Activated T-helper 1 cell treated with anti-CD3 and anti-CD28 coated beads, Interleukin-12 subunit alpha, Interleukin-12 subunit beta, Interleukin-2, Interleukin-4 antibody, amounts not matched to agents 30 ng/mL and 10 ng/mL and 1 ng/mL, durations not matched to agents 14 hours and 24 hours and 36 hours (primary cell): ENCODE measurements at regions of chr2 and their contacts with region 1.

Region 1: GRCh38 chr2:110847651-110848050 is 115.3 kb downstream of the ACOXL start:
- DNase-seq: no peak
- H3K4me3 Mint-ChIP-seq: no peak overlapping the region
- H3K27ac Mint-ChIP-seq: peak overlapping the region; percentile 96
- H3K4me1 Mint-ChIP-seq: peaks cover 88% of the 10 kb centered on the region
- H3K27me3 Mint-ChIP-seq: peaks cover 6% of the 10 kb centered on the region

Region 2: DNA sequence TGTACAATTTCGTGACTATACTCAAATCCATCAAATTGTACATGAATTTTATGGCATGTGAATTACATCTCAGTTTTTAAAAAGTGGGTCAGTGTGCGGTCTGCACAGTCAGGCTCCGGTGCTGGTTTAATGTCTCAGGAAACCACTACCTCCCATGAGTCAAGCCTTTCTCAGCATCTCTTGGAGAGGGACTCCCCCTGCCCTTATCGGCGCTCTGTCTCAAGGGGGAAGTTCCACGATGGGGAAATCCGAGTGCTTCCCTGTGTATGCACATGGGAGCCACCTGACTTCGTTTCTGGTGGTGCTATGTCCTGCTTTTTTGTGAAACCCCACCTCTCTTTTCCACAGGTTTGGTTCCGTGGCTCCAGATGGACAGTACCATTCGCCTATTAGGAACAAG is 42.7 kb before region 1 on chr2:
- intact Hi-C with region 1: loop called (anchors 1 kb)
- DNase-seq: peak; percentile 66
- H3K4me3 Mint-ChIP-seq: peak overlapping the region; percentile 45
- H3K27ac Mint-ChIP-seq: peak overlapping the region; percentile 46
- H3K4me1 Mint-ChIP-seq: peaks cover 25% of the 10 kb centered on the region
- H3K27me3 Mint-ChIP-seq: peaks cover 42% of the 10 kb centered on the region

Region 3: GRCh38 chr2:110871637-110872036 is 24.0 kb after region 1 on chr2:
- intact Hi-C with region 1: loop called (anchors 1 kb)
- DNase-seq: peak; percentile 34
- H3K4me3 Mint-ChIP-seq: no peak overlapping the region
- H3K27ac Mint-ChIP-seq: no peak overlapping the region
- H3K4me1 Mint-ChIP-seq: peaks cover 69% of the 10 kb centered on the region
- H3K27me3 Mint-ChIP-seq: peaks cover 14% of the 10 kb centered on the region

Region 4: DNA sequence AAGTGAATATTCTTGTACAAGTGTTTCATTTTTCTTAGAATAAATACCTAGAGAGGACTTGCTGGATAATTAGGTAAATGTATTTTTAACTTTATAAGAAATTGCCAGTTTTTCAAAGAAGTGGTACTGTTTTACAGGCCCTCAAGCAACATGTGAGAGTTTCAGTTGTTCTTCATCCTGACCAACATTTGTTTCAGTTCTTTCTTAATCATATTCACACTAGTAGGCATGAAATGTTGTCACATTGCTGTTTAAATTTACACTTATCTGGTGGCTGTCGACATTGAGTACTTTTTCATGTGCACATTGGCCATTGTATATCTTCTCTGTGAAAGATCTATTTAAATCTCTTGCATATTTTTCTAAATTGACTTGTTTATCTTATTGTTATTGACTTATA is 62.8 kb after region 1 on chr2:
- intact Hi-C with region 1: loop called (anchors 2 kb)
- DNase-seq: no peak
- H3K4me3 Mint-ChIP-seq: no peak overlapping the region
- H3K27ac Mint-ChIP-seq: no peak overlapping the region
- H3K4me1 Mint-ChIP-seq: no peaks in the 10 kb centered on the region
- H3K27me3 Mint-ChIP-seq: peaks cover 38% of the 10 kb centered on the region

Region 5: DNA sequence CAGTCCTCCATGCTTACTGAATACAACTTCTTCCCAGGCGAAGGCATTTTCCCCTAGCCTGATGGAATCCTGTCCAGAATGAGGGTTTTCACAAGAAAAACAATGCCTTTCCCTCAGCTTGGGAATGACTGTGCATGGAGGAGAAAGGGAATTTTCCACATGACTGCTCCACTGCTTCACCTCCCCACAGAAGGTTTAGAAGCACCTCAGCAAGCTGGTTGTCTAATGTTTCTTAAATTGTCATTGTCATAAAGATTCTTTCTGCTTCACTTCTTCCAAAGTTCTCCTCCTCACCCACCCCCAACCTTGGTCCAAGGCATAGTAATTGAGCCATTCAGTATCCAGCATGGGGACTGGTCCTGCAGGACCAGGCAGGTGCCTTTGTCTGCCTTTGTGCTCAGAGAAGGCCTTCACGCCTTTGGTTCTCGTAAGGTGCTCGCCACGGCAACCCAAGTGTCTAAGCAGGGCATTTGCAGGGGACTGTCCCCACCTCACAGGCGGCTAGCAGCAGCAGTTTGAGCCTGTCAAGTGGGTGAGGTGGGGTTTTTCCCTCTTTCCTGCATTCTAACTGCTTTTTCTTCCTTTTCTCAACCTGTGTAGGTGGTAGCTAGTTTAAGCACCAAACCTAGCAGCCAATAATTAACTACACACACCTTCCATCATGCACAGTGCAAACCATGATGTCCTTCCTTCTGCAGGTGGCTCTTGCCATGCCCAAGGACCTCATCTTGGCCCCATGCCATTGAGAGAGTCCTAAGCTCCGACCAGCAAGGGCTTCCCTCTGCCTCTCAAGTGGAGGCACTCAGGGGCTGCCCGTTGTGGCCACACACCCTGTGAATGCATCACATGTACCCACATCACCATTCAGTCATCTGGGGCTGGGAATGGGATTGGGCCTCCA is 207.4 kb after region 1 on chr2:
- intact Hi-C with region 1: loop called (anchors 1 kb)
- DNase-seq: no peak
- H3K4me3 Mint-ChIP-seq: no peak overlapping the region
- H3K27ac Mint-ChIP-seq: peak overlapping the region; percentile 80
- H3K4me1 Mint-ChIP-seq: peaks cover 41% of the 10 kb centered on the region
- H3K27me3 Mint-ChIP-seq: peaks cover 18% of the 10 kb centered on the region

Region 6: GRCh38 chr2:111209045-111209514 is 361.4 kb after region 1 on chr2:
- intact Hi-C with region 1: loop called (anchors 1 kb)
- DNase-seq: peak; percentile 62
- H3K4me3 Mint-ChIP-seq: peak overlapping the region; percentile 39
- H3K27ac Mint-ChIP-seq: peak overlapping the region; percentile 73
- H3K4me1 Mint-ChIP-seq: peaks cover 42% of the 10 kb centered on the region
- H3K27me3 Mint-ChIP-seq: peaks cover 8% of the 10 kb centered on the region